A549 (cell line): ENCODE measurements at regions of chrX and their contacts with region 1.

Region 1: DNA sequence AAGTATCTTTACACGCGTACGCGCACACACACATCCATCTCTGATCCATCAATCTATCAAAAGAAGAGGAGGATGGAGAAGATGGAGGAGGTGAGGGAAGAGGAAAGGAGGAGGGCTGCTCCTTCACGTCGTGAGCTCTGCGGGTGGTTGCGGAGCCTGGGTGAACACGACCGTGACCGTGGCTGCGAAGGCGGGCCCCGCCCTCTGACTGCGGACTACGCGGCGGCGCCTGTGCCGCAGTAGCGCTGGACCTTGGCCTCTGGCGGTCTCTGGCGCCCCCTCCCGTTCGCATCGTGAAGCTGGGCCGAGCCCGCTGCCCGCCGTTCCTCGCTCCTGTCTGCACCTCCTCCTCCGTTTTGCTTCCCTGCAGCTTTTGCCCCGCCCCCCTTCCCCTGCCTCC is 37.7 kb upstream of the ARAF start:
- DNase-seq: peak; percentile 64 to 78
- ATAC-seq: peak; percentile 99 to 100
- H3K4me3 ChIP-seq: peak overlapping the region; percentile 56
- H3K27ac ChIP-seq: peak overlapping the region; percentile 75 to 89
- H3K4me1 ChIP-seq: no peaks in the 10 kb centered on the region
- CTCF ChIP-seq: peak; percentile 74
- EP300 ChIP-seq: no peak
- POLR2A ChIP-seq: no peak
- RAD21 ChIP-seq: peak; percentile 86 to 96

Region 2: DNA sequence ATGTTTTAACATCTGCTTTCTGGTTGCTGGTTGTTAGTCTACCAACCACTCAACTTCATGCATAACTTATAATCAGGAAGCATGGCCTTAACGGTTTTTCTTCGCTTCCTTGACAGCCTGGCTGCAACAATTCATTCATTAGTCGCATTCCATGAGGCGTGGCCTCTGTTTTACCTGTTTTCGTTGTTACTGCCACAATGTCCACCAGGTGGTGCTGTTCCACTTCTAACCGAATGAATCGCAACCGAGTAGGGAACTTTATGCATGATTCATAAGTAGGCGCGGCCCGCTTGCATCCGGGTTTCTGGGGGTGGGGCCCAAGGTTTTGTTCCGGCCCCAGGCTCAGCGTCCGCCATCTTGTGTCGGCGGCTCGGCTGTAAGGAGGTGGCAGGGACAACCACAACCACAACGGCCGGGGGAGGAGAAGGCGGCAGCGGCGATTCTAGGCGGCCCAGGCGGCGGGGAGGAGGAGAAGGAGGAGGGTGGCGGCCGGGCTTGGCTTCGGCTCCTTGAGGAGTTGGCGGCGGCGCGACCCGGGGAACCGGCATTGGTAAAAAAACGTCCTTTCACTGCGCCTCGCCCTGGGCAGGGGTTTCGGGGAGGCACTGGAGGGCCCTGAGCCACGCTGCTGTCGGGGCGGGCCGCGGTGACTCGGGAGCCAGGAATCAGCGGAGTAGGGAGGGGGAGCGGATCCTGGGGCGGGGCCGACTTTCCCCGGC is 329.7 kb before region 1 on chrX and contains the start of gene UBA1:
- CTCF ChIA-PET with region 1: interaction called, 52 read pairs
- POLR2A ChIA-PET with region 1: interaction called, 3 read pairs
- DNase-seq: peak; percentile 88 to 96
- ATAC-seq: peak; percentile 70 to 84
- H3K4me3 ChIP-seq: peak within 1 kb of the TSS; percentile 93
- H3K27ac ChIP-seq: peak within 1 kb of the TSS; percentile 99
- H3K4me1 ChIP-seq: peaks cover 42% of the 10 kb centered on the region
- CTCF ChIP-seq: peak; percentile 78
- EP300 ChIP-seq: no peak
- POLR2A ChIP-seq: peak; percentile 91
- RAD21 ChIP-seq: peak; percentile 85 to 89
- polyA plus RNA-seq, gene UBA1: 160 and 192 TPM in 2 replicates

Region 3: GRCh38 chrX:47200385-47201150 is 322.7 kb before region 1 on chrX:
- CTCF ChIA-PET with region 1: interaction called, 52 read pairs
- POLR2A ChIA-PET with region 1: interaction called, 3 read pairs
- DNase-seq: peak; percentile 48 to 88
- ATAC-seq: peak; percentile 90 to 92
- H3K4me3 ChIP-seq: no peak overlapping the region
- H3K27ac ChIP-seq: peak overlapping the region; percentile 61 to 86
- H3K4me1 ChIP-seq: peaks cover 58% of the 10 kb centered on the region
- CTCF ChIP-seq: no peak; the same call in 2 of the 3 replicates
- EP300 ChIP-seq: no peak
- POLR2A ChIP-seq: no peak
- RAD21 ChIP-seq: peak in 1 of 2 experiments; percentile 23; a peak in 1 of 5 replicates

Region 4: GRCh38 chrX:47311932-47312774 is 211.1 kb before region 1 on chrX:
- CTCF ChIA-PET with region 1: interaction called, 12 read pairs
- POLR2A ChIA-PET with region 1: no interaction called
- DNase-seq: peak; percentile 30 to 76
- ATAC-seq: peak; percentile 88 to 93
- H3K4me3 ChIP-seq: no peak overlapping the region
- H3K27ac ChIP-seq: no peak overlapping the region; a peak in 1 of 6 replicates
- H3K4me1 ChIP-seq: no peaks in the 10 kb centered on the region
- CTCF ChIP-seq: peak; percentile 48
- EP300 ChIP-seq: no peak
- POLR2A ChIP-seq: no peak
- RAD21 ChIP-seq: peak; percentile 55 to 59

Region 5: DNA sequence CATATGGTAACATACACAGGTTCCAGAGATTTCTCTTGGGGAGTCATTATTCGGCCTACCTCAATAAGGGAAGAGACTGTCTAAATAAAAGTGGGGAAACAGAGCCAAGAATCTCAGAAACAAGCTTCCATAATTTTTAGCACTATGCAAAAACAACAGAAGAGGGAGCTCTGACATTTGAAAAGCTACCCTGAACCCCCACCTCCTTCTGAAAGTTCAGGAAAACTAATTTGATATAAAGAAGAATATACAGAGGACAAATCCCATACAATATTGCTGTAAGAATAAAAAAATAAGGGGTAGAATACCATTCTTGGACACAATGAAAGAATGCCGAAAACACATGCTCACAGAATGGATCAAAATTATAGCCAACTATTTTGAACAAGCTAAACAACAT is 26.0 kb before region 1 on chrX:
- CTCF ChIA-PET with region 1: interaction called, 20 read pairs
- POLR2A ChIA-PET with region 1: no interaction called
- DNase-seq: peak in 1 of 2 experiments; percentile 5
- ATAC-seq: no peak
- H3K4me3 ChIP-seq: no peak overlapping the region
- H3K27ac ChIP-seq: no peak overlapping the region
- H3K4me1 ChIP-seq: no peaks in the 10 kb centered on the region
- CTCF ChIP-seq: peak; percentile 40
- EP300 ChIP-seq: no peak
- POLR2A ChIP-seq: no peak
- RAD21 ChIP-seq: peak; percentile 56 to 65; a peak in 4 of 5 replicates

Region 6: DNA sequence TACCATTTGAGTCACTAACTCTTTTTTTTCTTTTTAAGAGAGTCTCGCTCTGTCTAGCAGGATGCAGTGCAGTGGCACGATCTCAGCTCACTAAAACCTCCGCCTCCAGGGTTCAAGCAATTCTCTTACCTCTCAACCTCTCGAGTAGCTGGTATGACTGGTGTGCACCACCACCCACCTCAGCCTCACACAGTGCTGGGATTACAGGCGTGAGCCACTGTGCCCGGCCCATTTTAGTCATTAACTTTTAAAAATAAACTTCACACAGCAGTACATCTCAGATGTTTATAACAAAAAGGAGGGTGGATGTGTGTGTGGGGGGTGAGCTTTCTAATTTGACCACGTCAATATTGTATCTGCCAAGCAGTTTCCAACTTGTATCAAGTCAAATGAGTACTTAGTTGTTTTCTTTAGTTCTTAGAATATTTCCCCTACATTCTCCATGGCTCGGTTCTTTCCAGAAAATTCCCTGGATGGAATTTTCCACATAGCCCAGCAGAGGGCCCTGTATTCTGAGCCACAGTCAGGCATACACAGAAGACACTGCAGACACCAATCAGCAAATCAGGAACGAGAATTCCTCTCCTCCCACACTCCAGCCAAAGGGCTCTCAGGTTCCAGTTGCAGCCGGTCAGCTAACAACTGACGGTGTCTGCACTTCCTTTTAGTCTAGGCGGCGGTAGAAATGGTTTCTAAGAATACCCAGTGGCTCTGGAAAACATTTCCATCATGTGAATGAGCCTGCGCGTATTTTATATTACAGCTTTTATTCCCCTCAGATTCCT is 17.6 kb after region 1 on chrX:
- CTCF ChIA-PET with region 1: interaction called, 21 read pairs
- POLR2A ChIA-PET with region 1: no interaction called
- DNase-seq: peak; percentile 90 to 91
- ATAC-seq: peak; percentile 100
- H3K4me3 ChIP-seq: no peak overlapping the region
- H3K27ac ChIP-seq: peak overlapping the region; percentile 37 to 72; a peak in 4 of 6 replicates
- H3K4me1 ChIP-seq: no peaks in the 10 kb centered on the region
- CTCF ChIP-seq: peak; percentile 54
- EP300 ChIP-seq: no peak
- POLR2A ChIP-seq: peak; percentile 33; the same call in 1 of the 2 replicates
- RAD21 ChIP-seq: peak; percentile 50 to 62

Region 7: DNA sequence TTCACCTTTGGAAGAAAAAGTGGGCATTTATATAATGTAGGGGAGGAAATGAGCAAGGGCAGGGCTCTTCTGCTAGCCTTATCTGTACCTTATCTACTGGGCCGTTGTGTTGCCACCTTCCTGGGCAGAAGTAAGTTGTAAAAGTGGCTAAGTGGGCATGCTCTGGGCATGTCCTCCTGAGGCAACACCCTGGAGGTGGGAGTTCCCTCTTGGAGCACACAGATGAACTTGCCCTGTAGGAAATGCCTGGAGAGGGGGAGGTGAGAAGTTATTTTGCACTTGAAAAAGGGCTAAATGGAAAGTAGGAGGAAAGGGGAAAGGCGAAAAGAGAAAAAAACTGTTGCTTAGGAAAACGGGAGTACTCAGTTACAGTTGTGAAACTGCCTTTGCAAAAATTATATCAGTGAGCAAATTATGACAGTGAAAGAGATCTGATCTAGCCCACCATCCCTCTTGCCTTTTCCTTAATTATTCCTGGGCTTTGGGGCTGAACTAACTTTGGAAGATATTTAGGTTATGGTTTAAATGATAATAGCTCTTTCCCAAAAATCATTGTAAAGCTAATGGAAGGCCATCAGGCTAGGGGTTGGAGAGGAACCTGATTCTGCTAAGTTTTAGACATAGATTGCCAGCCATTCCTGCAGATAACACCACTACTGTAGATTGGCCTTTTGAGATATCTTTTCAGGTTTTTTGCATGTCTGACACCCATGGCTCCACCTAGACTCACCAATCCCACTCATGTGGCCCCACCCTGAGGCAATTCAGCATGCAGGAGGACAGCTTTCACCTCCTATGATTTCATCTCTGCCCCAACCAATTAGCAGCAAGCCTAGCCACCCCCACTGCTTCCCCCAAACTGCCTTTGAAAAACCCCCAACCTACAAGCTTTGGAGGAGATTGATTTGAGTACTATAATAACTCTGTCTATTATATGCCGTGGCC is 292.9 kb after region 1 on chrX:
- CTCF ChIA-PET with region 1: no interaction called
- POLR2A ChIA-PET with region 1: no interaction called
- DNase-seq: peak in 1 of 2 experiments; percentile 26
- ATAC-seq: no peak
- H3K4me3 ChIP-seq: no peak overlapping the region
- H3K27ac ChIP-seq: peak overlapping the region; percentile 24 to 46; a peak in 2 of 6 replicates
- H3K4me1 ChIP-seq: no peaks in the 10 kb centered on the region; the same call in 2 of the 3 replicates
- CTCF ChIP-seq: no peak
- EP300 ChIP-seq: no peak
- POLR2A ChIP-seq: no peak
- RAD21 ChIP-seq: no peak